GM12878 (cell line): ENCODE measurements at regions of chr11 and their contacts with region 1.

Region 1: DNA sequence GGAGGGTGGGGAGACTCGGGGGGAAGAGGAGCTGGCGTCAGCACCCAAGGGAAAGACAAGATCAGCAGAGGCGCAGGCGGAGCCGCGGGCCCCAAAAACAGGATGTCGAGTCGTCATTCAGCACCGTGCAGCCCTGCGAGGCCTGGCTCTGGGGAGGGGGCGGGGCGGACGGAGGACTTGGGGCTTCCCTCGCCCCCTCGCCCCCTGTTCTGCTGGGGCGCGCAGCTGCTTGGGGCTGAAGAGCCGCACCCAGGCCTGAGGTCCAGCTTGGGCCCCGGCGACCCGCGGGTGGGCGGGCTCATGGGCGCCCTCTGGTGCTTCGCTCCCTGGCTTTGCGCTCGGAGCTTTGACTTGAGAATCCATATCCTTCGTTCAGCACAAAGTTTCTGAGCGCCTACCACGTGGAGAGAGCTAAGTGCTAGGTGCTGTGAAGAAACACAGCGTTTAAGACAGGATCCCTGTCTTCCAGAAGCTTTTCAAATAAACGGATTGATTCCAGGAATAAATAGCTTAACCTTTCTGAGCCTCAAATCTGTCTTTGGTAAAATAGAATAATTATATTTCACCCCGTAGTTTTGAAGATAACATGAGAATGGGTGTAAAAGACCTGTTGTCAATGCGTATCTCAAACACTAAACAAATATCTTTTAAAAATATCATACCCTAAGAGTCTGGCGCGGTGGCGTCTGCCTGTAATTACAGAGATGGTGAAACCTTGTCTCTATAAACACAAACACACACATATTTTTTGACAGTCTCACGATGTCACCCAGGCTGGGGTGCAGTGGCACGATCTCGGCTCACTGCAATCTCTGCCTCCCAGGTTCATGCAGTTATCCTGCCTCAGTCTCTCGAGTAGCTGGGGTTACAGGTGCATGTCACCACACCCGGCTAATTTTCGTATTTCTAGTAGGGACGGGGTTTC is 929 bp upstream of the RHOG start:
- DNase-seq: peak; percentile 79
- ATAC-seq: peak; percentile 71
- H3K4me3 ChIP-seq: peak overlapping the region; percentile 98
- H3K27ac ChIP-seq: peak overlapping the region; percentile 82
- H3K4me1 ChIP-seq: peaks cover 15% of the 10 kb centered on the region
- H3K27me3 ChIP-seq: no peaks in the 10 kb centered on the region
- CTCF ChIP-seq: peak; percentile 78 to 88 (median 85)
- EP300 ChIP-seq: no peak
- POLR2A ChIP-seq: peak; percentile 71
- RAD21 ChIP-seq: peak; percentile 54

Region 2: DNA sequence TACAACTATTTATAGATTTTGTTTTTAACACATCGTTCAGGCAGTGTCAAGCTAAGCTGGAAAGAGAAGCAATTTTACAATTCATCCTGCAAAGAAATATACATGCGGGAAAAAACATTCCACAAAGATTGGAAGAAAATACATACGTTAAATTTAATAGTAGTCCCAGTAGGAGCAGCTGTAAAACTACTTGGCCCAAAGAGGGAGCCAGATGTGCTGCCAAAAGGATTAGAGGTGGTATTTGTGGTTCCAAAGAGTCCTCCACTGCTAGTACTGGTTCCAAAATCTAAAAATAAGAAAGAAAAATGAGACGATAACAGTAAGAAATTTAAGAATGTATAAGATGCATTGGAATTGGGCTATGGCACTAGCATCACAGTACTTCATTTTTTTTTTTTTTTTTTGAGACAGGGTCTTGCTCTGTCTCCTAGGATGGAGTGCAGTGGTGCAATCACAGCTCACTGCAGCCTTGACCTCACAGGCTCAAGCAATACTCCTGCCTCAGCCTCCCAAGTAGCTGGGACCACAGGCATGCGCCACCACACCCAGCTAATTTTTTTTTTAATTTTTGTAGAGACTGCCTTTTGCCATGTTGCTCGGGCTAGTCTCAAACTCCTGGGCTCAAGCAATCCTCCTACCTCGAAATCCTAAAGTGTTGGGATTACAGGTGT is 65.8 kb before region 1 on chr11:
- CTCF ChIA-PET with region 1: no interaction called
- POLR2A ChIA-PET with region 1: no interaction called
- RAD21 ChIA-PET with region 1: no interaction called
- SMC1A ChIA-PET with region 1: no interaction called
- in situ Hi-C with region 1: no loop called
- intact Hi-C with region 1: no loop called
- DNase-seq: no peak
- ATAC-seq: no peak
- H3K4me3 ChIP-seq: no peak overlapping the region
- H3K27ac ChIP-seq: no peak overlapping the region
- H3K4me1 ChIP-seq: no peaks in the 10 kb centered on the region
- H3K27me3 ChIP-seq: no peaks in the 10 kb centered on the region
- CTCF ChIP-seq: no peak
- EP300 ChIP-seq: no peak
- POLR2A ChIP-seq: no peak
- RAD21 ChIP-seq: no peak

Region 3: GRCh38 chr11:3797329-3798095 is 44.2 kb before region 1 on chr11 and contains the start of gene NUP98:
- CTCF ChIA-PET with region 1: interaction called, 9 read pairs
- POLR2A ChIA-PET with region 1: interaction called, 22 read pairs
- RAD21 ChIA-PET with region 1: interaction called, 15 read pairs
- SMC1A ChIA-PET with region 1: interaction called, 6 read pairs
- in situ Hi-C with region 1: no loop called
- intact Hi-C with region 1: loop called (anchors 2 kb)
- DNase-seq: peak; percentile 99
- ATAC-seq: peak; percentile 94
- H3K4me3 ChIP-seq: peak within 1 kb of the TSS; percentile 91
- H3K27ac ChIP-seq: peak within 1 kb of the TSS; percentile 97
- H3K4me1 ChIP-seq: peaks cover 7% of the 10 kb centered on the region; the same call in 1 of the 2 replicates
- H3K27me3 ChIP-seq: no peaks in the 10 kb centered on the region
- CTCF ChIP-seq: no peak
- EP300 ChIP-seq: no peak; a peak in 1 of 4 replicates
- POLR2A ChIP-seq: peak; percentile 97
- RAD21 ChIP-seq: no peak
- polyA plus RNA-seq, gene NUP98: 21.7 to 23.7 TPM

Region 4: DNA sequence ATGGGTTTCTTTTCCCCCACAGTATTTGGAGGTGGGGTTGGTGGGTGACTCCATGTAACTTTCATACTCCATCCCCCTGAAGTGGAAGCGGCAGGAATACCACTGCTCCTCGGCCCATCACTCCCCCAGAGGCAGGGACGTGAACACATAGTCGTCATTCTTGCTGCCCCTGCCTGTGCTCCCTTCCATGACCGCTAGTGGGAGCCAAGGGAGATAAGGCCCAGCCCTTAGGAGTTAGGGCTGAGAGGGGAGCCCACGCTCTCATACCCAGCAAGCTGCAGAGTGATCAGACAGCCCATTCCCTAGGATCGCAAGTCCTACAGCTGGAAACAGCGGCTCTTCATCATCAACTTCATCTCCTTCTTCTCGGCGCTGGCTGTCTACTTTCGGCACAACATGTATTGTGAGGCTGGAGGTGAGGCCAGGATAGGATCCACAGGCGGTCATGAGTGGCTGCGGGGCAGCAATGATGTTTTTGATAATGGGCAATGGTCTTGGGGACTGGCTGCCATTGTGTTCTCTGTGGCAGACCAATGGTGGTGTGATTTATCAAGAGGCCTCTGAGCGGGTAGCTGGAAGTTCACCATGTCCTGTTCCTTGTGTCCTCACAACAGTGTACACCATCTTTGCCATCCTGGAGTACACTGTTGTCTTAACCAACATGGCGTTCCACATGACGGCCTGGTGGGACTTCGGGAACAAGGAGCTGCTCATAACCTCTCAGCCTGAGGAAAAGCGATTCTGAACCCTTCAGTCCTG is 16.8 kb before region 1 on chr11:
- CTCF ChIA-PET with region 1: interaction called, 1,047 read pairs
- POLR2A ChIA-PET with region 1: interaction called, 16 read pairs
- RAD21 ChIA-PET with region 1: interaction called, 24 read pairs
- SMC1A ChIA-PET with region 1: interaction called, 7 read pairs
- in situ Hi-C with region 1: no loop called
- intact Hi-C with region 1: loop called (anchors 1 kb)
- DNase-seq: no peak
- ATAC-seq: peak; percentile 97
- H3K4me3 ChIP-seq: no peak overlapping the region
- H3K27ac ChIP-seq: no peak overlapping the region
- H3K4me1 ChIP-seq: peaks cover 2% of the 10 kb centered on the region; the same call in 1 of the 2 replicates
- H3K27me3 ChIP-seq: no peaks in the 10 kb centered on the region
- CTCF ChIP-seq: peak; percentile 83 to 97 (median 96)
- EP300 ChIP-seq: no peak
- POLR2A ChIP-seq: peak; percentile 12; the same call in 1 of the 2 replicates
- RAD21 ChIP-seq: peak; percentile 75

Region 5: GRCh38 chr11:3867209-3868091 is 25.8 kb after region 1 on chr11:
- CTCF ChIA-PET with region 1: interaction called, 1,047 read pairs
- POLR2A ChIA-PET with region 1: interaction called, 16 read pairs
- RAD21 ChIA-PET with region 1: interaction called, 304 read pairs
- SMC1A ChIA-PET with region 1: interaction called, 633 read pairs
- in situ Hi-C with region 1: no loop called
- intact Hi-C with region 1: no loop called
- DNase-seq: peak; percentile 66
- ATAC-seq: peak; percentile 57
- H3K4me3 ChIP-seq: peak overlapping the region; percentile 28; the same call in 1 of the 2 replicates
- H3K27ac ChIP-seq: peak overlapping the region; percentile 82
- H3K4me1 ChIP-seq: peaks cover 65% of the 10 kb centered on the region
- H3K27me3 ChIP-seq: no peaks in the 10 kb centered on the region
- CTCF ChIP-seq: no peak
- EP300 ChIP-seq: no peak
- POLR2A ChIP-seq: no peak
- RAD21 ChIP-seq: no peak

Region 6: DNA sequence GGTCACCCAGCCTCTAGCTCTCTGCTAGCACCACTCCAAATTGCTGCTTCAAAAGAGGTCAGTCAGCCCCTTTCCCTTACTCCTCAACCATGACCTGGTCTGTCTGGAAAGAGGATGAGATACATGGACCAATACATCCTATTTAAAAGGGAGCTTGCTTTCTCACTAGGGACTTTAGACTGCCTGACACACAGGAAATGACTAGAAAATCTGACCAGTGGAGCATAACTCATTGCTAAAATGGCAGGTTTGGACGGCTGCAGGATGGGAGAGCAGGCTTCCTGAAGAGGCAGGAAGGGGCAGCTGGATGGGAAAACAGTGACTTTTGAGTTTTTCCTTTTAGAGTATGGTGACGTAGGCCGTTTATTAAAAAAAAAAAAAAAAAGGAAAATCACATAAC is 39.0 kb after region 1 on chr11:
- CTCF ChIA-PET with region 1: interaction called, 1,047 read pairs
- POLR2A ChIA-PET with region 1: interaction called, 52 read pairs
- RAD21 ChIA-PET with region 1: interaction called, 25 read pairs
- SMC1A ChIA-PET with region 1: interaction called, 633 read pairs
- in situ Hi-C with region 1: no loop called
- intact Hi-C with region 1: loop called (anchors 1 kb)
- DNase-seq: no peak
- ATAC-seq: peak; percentile 70
- H3K4me3 ChIP-seq: peak overlapping the region; percentile 46
- H3K27ac ChIP-seq: peak overlapping the region; percentile 83
- H3K4me1 ChIP-seq: peaks cover 65% of the 10 kb centered on the region
- H3K27me3 ChIP-seq: no peaks in the 10 kb centered on the region
- CTCF ChIP-seq: no peak
- EP300 ChIP-seq: no peak
- POLR2A ChIP-seq: 0 out of 2 replicates have a peak, but pooled peaks have one; percentile 19
- RAD21 ChIP-seq: no peak

Region 7: GRCh38 chr11:3886985-3887384 is 45.3 kb after region 1 on chr11:
- CTCF ChIA-PET with region 1: interaction called, 1,047 read pairs
- POLR2A ChIA-PET with region 1: interaction called, 6 read pairs
- RAD21 ChIA-PET with region 1: interaction called, 10 read pairs
- SMC1A ChIA-PET with region 1: interaction called, 633 read pairs
- in situ Hi-C with region 1: no loop called
- intact Hi-C with region 1: no loop called
- DNase-seq: no peak
- ATAC-seq: no peak
- H3K4me3 ChIP-seq: no peak overlapping the region
- H3K27ac ChIP-seq: no peak overlapping the region
- H3K4me1 ChIP-seq: peaks cover 28% of the 10 kb centered on the region
- H3K27me3 ChIP-seq: no peaks in the 10 kb centered on the region
- CTCF ChIP-seq: no peak
- EP300 ChIP-seq: no peak
- POLR2A ChIP-seq: no peak
- RAD21 ChIP-seq: no peak

Region 8: DNA sequence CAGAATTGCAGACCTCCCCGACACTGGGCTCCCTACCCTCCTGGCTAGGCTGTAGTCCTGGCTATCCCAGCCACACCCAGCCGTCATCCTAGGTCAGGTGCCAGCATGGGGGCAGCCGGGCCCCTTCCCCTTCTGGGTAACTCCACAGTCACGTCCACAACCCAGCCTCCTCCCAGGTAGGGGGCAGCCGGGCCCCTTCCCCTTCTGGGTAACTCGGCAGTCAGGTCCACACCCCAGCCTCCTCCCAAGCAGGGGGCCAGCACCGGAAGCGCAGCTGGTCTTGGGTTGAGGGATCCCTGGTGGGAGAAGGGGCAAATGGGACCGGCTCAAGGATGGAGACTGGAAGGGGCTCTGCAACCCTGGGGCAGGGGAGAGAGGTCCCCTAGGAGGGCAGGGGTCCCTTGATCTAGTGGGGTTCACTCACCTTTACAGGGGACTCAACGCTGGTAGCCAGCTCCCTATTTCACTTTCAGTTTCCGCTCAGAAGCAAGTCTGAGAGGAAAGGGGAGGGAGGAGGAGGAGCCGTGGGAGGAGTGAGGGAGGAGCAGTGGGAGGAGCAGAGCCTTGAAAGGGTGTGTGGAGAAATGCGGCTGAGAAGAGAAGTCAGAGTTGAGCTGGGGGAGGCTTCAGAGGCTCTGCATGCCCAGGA is 551.6 kb after region 1 on chr11 and contains the start of gene TRIM21:
- CTCF ChIA-PET with region 1: no interaction called
- POLR2A ChIA-PET with region 1: no interaction called
- RAD21 ChIA-PET with region 1: no interaction called
- SMC1A ChIA-PET with region 1: no interaction called
- in situ Hi-C with region 1: loop called (anchors 25 kb)
- intact Hi-C with region 1: no loop called
- DNase-seq: peak; percentile 72
- ATAC-seq: peak; percentile 99
- H3K4me3 ChIP-seq: peak within 1 kb of the TSS; percentile 87
- H3K27ac ChIP-seq: peak within 1 kb of the TSS; percentile 95
- H3K4me1 ChIP-seq: no peaks in the 10 kb centered on the region
- H3K27me3 ChIP-seq: no peaks in the 10 kb centered on the region
- CTCF ChIP-seq: no peak
- EP300 ChIP-seq: no peak
- POLR2A ChIP-seq: peak; percentile 82
- RAD21 ChIP-seq: no peak
- polyA plus RNA-seq, gene TRIM21: 24.7 to 28.6 TPM